Mammary epithelial cell (primary cell): ENCODE measurements at regions of chr10 and their contacts with region 1.

Region 1: GRCh38 chr10:97400665-97401454 is at the start of gene RRP12:
- DNase-seq: peak; percentile 97
- H3K4me3 ChIP-seq: peak within 1 kb of the TSS; percentile 60 to 92 (median 88)
- H3K27ac ChIP-seq: peak within 1 kb of the TSS; percentile 95
- H3K4me1 ChIP-seq: no peaks in the 10 kb centered on the region
- H3K27me3 ChIP-seq: no peaks in the 10 kb centered on the region
- CTCF ChIP-seq: peak in 1 of 2 donors; percentile 19
- total RNA-seq, gene RRP12: 35.8 to 63.1 TPM

Region 2: DNA sequence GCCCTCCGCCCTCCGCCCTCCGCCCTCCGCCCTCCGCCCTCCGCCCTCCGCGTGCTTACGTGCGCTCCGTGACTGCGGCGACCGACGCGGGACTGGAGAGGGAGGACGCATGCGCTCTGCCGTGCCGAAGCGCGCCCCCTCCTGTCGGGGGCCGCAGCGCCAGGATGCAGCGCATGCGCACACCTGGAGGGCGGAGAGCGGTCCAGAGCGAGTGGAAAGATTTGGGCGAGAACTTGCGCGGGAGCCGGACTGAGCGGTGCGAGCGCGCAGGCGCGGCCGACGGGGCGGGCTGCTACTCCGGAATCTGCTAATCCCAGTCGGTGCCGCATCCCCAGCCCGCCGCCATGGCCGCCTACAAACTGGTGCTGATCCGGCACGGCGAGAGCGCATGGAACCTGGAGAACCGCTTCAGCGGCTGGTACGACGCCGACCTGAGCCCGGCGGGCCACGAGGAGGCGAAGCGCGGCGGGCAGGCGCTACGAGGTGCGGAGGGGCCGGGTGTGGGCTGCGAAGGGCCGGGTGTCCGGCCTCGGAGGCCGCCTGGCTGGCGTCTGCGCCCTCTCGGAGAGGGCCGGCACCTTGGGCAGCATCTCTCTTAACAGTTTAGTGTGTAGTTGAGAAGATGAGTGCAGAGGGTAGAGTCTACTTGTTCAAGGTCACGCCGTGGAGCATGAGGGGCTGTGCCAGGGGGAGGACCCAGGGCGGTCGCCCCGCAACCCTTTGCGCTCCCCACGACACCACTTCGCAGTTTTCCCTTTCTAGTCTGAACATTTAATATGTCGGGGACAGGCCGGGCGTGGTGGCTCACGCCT is 25.3 kb after region 1 on chr10 and contains the start of gene PGAM1:
- CTCF ChIA-PET with region 1: interaction called, 12 read pairs
- dilution Hi-C with region 1: no loop called
- in situ Hi-C with region 1: no loop called
- intact Hi-C with region 1: no loop called
- DNase-seq: peak; percentile 96
- H3K4me3 ChIP-seq: peak within 1 kb of the TSS; percentile 83 to 98 (median 97)
- H3K27ac ChIP-seq: peak within 1 kb of the TSS; percentile 86
- H3K4me1 ChIP-seq: peaks cover 16% of the 10 kb centered on the region
- H3K27me3 ChIP-seq: no peaks in the 10 kb centered on the region
- CTCF ChIP-seq: peak; percentile 61 to 83
- total RNA-seq, gene PGAM1: 380 to 517 TPM

Region 3: DNA sequence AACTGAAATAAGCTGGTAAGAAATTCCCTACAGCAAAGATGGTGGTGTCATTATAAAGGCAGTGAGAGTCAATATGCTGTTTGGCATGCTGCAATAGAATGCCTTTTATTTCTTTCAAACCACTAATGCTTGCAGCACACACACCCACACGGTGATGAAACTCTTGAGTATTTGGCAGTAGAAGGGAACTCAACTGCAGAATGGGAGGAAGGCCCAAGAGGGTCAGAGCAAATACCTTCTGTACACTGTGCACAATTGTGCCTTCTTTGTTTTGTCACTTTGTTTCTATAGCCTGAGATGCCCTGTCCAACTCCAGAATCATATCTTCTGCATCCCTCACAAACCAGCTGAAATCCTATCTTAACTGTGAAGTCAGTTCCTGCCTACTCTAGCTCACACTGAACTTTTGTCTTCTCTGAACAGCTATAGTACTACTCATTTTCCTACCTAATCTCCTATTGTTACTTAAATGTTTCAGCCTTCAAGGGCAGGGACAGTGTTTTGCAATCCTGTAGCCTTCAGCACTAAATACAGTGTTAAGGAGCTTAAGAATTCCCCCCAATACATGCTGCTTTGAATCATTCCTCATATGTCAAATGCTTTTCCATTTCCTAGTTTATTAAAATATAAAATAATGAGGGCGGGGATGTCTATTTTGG is 75.2 kb after region 1 on chr10:
- CTCF ChIA-PET with region 1: no interaction called
- dilution Hi-C with region 1: no loop called
- in situ Hi-C with region 1: no loop called
- intact Hi-C with region 1: no loop called
- DNase-seq: peak; percentile 41
- H3K4me3 ChIP-seq: no peak overlapping the region
- H3K27ac ChIP-seq: no peak overlapping the region
- H3K4me1 ChIP-seq: peaks cover 31% of the 10 kb centered on the region
- H3K27me3 ChIP-seq: no peaks in the 10 kb centered on the region
- CTCF ChIP-seq: no peak

Region 4: DNA sequence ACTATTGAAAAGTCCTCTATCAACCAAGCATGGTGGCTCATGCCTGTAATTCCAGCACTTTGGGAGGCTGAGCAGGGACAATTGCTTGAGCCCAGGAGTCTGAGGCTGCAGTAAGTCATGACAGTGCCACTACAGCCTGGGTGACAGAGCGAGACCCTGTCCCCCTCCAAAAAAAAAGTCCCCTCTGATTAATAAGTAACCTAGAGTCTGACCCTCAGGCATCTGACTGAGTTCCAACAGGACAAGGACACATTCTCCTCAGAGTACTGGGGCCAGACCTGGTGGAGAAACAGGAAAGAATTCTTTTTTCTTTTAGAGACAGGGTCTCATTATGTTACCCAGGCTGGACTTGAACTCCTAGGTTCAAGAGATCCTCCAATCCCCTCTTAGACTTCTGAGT is 222.4 kb after region 1 on chr10:
- CTCF ChIA-PET with region 1: no interaction called
- dilution Hi-C with region 1: no loop called
- in situ Hi-C with region 1: no loop called
- intact Hi-C with region 1: no loop called
- DNase-seq: no peak
- H3K4me3 ChIP-seq: no peak overlapping the region
- H3K27ac ChIP-seq: no peak overlapping the region
- H3K4me1 ChIP-seq: no peaks in the 10 kb centered on the region
- H3K27me3 ChIP-seq: no peaks in the 10 kb centered on the region
- CTCF ChIP-seq: no peak